AG04450 (cell line): ENCODE measurements at regions of chr13 and their contacts with region 1.

Region 1: GRCh38 chr13:75760131-75761021 is 124.2 kb downstream of the LMO7 start:
- DNase-seq: no peak
- H3K4me3 ChIP-seq: peak overlapping the region; percentile 18; the same call in 1 of the 2 replicates
- H3K27ac ChIP-seq: no peak overlapping the region
- H3K27me3 ChIP-seq: no peaks in the 10 kb centered on the region
- CTCF ChIP-seq: peak; percentile 31

Region 2: GRCh38 chr13:76014406-76015318 is 254.3 kb after region 1 on chr13:
- CTCF ChIA-PET with region 1: interaction called, 12 read pairs
- POLR2A ChIA-PET with region 1: no interaction called
- DNase-seq: no peak
- H3K4me3 ChIP-seq: no peak overlapping the region
- H3K27ac ChIP-seq: peak overlapping the region; percentile 21
- H3K27me3 ChIP-seq: no peaks in the 10 kb centered on the region
- CTCF ChIP-seq: no peak